CD14-positive monocyte (primary cell): ENCODE measurements at regions of chr2 and their contacts with region 1.

Region 1: GRCh38 chr2:207274530-207275189 is 108.9 kb upstream of the KLF7 start:
- DNase-seq: peak in 2 of 3 donors; percentile 37 to 48
- H3K4me3 ChIP-seq: peak overlapping the region in 1 of 3 experiments; percentile 39
- H3K4me3 Mint-ChIP-seq: no peak overlapping the region
- H3K27ac ChIP-seq: peak overlapping the region in 1 of 2 donors; percentile 43
- H3K27ac Mint-ChIP-seq: peak overlapping the region in 6 of 7 donors; percentile 14 to 63 (median 28)
- H3K4me1 ChIP-seq: peaks cover 9 to 13% of the 10 kb centered on the region in 2 donors
- H3K4me1 Mint-ChIP-seq: peaks cover 14% of the 10 kb centered on the region
- H3K27me3 ChIP-seq: no peaks in the 10 kb centered on the region
- H3K27me3 Mint-ChIP-seq: no peaks in the 10 kb centered on the region
- CTCF ChIP-seq: no peak

Region 2: GRCh38 chr2:207223051-207223450 is 51.6 kb before region 1 on chr2:
- intact Hi-C with region 1: loop called in 1 of 2 experiments (anchors 10 kb)
- DNase-seq: peak in 1 of 3 donors; percentile 26
- H3K4me3 ChIP-seq: no peak overlapping the region
- H3K4me3 Mint-ChIP-seq: no peak overlapping the region
- H3K27ac ChIP-seq: no peak overlapping the region
- H3K27ac Mint-ChIP-seq: peak overlapping the region in 1 of 7 donors; percentile 74
- H3K4me1 ChIP-seq: peaks cover 8 to 9% of the 10 kb centered on the region in 2 donors
- H3K4me1 Mint-ChIP-seq: peaks cover 16% of the 10 kb centered on the region
- H3K27me3 ChIP-seq: peaks cover 0 to 3% of the 10 kb centered on the region in 2 donors
- H3K27me3 Mint-ChIP-seq: peaks cover 2 to 9% (median 3%) of the 10 kb centered on the region in 3 donors
- CTCF ChIP-seq: no peak